ENCODE measurements at regions of chr6 and their contacts with region 1.

Region 1: GRCh38 chr6:26054857-26055669 is 32.2 kb upstream of the HFE start:
- DNase-seq: peak; percentile 63
- ATAC-seq: peak; percentile 65
- H3K4me3 Mint-ChIP-seq: peak overlapping the region; percentile 97
- H3K27ac Mint-ChIP-seq: peak overlapping the region; percentile 100
- H3K4me1 Mint-ChIP-seq: peaks cover 20% of the 10 kb centered on the region
- H3K27me3 Mint-ChIP-seq: no peaks in the 10 kb centered on the region
- CTCF ChIP-seq: no peak

Region 2: GRCh38 chr6:25944688-25945574 is 110.1 kb before region 1 on chr6:
- CTCF ChIA-PET with region 1: no interaction called
- POLR2A ChIA-PET with region 1: no interaction called
- intact Hi-C with region 1: no loop called
- DNase-seq: no peak
- ATAC-seq: peak; percentile 50
- H3K4me3 Mint-ChIP-seq: no peak overlapping the region
- H3K27ac Mint-ChIP-seq: no peak overlapping the region
- H3K4me1 Mint-ChIP-seq: peaks cover 16% of the 10 kb centered on the region
- H3K27me3 Mint-ChIP-seq: no peaks in the 10 kb centered on the region
- CTCF ChIP-seq: no peak

Region 3: DNA sequence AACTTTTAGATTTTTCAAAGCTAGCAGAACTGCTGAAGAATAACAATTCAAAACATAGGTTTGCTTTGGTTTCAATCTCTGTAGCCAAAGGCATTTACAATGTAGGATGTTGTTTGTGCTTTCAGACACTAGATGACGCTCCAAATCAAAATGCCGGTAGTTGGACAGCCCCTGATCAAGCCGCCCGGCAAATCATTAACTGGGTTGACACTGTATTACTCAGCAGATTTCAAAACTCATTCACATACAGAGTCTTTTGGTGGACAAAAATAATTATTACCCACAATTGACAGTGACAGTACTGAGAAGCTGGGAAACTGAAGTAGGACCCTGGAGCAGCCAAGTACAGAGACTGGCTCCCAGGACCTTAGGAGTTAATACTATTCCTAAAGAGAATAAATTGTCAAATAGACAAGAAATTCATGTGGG is 10.9 kb after region 1 on chr6:
- CTCF ChIA-PET with region 1: interaction called, 4 read pairs
- POLR2A ChIA-PET with region 1: interaction called, 8 read pairs
- intact Hi-C with region 1: loop called (anchors 1 kb)
- DNase-seq: no peak
- ATAC-seq: peak; percentile 97
- H3K4me3 Mint-ChIP-seq: no peak overlapping the region
- H3K27ac Mint-ChIP-seq: peak overlapping the region; percentile 35
- H3K4me1 Mint-ChIP-seq: peaks cover 8% of the 10 kb centered on the region
- H3K27me3 Mint-ChIP-seq: peaks cover 3% of the 10 kb centered on the region
- CTCF ChIP-seq: peak; percentile 39

Region 4: GRCh38 chr6:26097268-26097875 is 42.3 kb after region 1 on chr6:
- CTCF ChIA-PET with region 1: interaction called, 349 read pairs
- POLR2A ChIA-PET with region 1: interaction called, 175 read pairs
- intact Hi-C with region 1: no loop called
- DNase-seq: no peak
- ATAC-seq: peak; percentile 81
- H3K4me3 Mint-ChIP-seq: no peak overlapping the region
- H3K27ac Mint-ChIP-seq: no peak overlapping the region
- H3K4me1 Mint-ChIP-seq: peaks cover 16% of the 10 kb centered on the region
- H3K27me3 Mint-ChIP-seq: no peaks in the 10 kb centered on the region
- CTCF ChIP-seq: no peak

Region 5: GRCh38 chr6:26204332-26205165 is 149.5 kb after region 1 on chr6:
- CTCF ChIA-PET with region 1: no interaction called
- POLR2A ChIA-PET with region 1: interaction called, 80 read pairs
- intact Hi-C with region 1: no loop called
- DNase-seq: peak; percentile 70
- ATAC-seq: peak; percentile 59
- H3K4me3 Mint-ChIP-seq: no peak overlapping the region
- H3K27ac Mint-ChIP-seq: no peak overlapping the region
- H3K4me1 Mint-ChIP-seq: peaks cover 30% of the 10 kb centered on the region
- H3K27me3 Mint-ChIP-seq: peaks cover 2% of the 10 kb centered on the region
- CTCF ChIP-seq: no peak